Activated naive CD4-positive, alpha-beta T cell treated with anti-CD3 and anti-CD28 coated beads for 36 hours (primary cell): ENCODE measurements at regions of chr13 and their contacts with region 1.

Region 1: GRCh38 chr13:38349390-38350113 is at the start of gene UFM1:
- DNase-seq: peak; percentile 90
- H3K4me3 Mint-ChIP-seq: peak within 1 kb of the TSS; percentile 95
- H3K27ac Mint-ChIP-seq: peak within 1 kb of the TSS; percentile 97
- H3K4me1 Mint-ChIP-seq: peaks cover 37% of the 10 kb centered on the region
- H3K27me3 Mint-ChIP-seq: no peaks in the 10 kb centered on the region
- total RNA-seq, gene UFM1: 36.5 to 41.7 TPM

Region 2: DNA sequence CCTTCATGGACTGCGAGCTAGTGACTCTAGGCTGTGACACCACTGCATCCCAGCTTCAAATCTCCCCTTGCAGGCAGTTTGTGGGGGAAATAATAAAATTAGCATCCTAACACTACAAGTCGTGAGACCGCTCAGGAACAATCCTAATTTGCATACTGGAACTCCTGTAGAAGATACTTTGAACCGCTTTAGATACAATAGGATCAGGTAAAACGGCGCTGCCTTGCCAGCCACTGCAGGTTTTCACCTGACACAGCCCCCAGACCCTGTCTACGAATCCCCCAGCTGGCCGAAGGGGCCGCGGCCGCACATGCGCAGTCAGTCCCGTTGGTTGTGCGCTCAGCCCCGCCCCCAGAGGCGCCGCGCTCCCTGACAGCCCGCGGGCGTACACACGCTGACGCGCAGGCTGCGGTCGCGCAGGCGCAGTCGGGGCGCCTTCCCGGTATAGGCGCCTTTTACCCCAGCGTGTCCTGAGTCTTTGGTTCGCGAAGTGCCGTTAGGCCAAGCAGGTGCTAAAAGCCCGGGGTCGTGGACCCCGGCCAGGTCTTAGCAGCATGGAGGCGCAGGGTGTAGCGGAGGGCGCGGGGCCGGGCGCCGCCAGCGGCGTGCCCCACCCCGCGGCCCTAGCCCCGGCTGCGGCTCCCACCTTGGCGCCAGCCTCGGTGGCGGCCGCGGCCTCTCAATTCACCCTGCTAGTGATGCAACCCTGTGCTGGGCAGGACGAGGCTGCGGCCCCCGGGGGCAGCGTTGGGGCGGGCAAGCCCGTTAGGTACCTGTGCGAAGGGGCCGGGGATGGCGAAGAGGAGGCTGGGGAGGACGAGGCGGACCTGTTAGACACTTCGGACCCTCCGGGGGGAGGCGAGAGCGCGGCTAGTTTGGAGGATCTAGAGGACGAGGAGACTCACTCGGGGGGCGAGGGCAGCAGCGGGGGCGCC is 1530.5 kb before region 1 on chr13 and contains the start of gene RFXAP:
- CTCF ChIA-PET with region 1: no interaction called
- intact Hi-C with region 1: loop called (anchors 2 kb)
- DNase-seq: peak; percentile 89
- H3K4me3 Mint-ChIP-seq: peak within 1 kb of the TSS; percentile 93
- H3K27ac Mint-ChIP-seq: peak within 1 kb of the TSS; percentile 75
- H3K4me1 Mint-ChIP-seq: peaks cover 45% of the 10 kb centered on the region
- H3K27me3 Mint-ChIP-seq: peaks cover 8% of the 10 kb centered on the region
- total RNA-seq, gene RFXAP: 9.2 to 12.2 TPM

Region 3: DNA sequence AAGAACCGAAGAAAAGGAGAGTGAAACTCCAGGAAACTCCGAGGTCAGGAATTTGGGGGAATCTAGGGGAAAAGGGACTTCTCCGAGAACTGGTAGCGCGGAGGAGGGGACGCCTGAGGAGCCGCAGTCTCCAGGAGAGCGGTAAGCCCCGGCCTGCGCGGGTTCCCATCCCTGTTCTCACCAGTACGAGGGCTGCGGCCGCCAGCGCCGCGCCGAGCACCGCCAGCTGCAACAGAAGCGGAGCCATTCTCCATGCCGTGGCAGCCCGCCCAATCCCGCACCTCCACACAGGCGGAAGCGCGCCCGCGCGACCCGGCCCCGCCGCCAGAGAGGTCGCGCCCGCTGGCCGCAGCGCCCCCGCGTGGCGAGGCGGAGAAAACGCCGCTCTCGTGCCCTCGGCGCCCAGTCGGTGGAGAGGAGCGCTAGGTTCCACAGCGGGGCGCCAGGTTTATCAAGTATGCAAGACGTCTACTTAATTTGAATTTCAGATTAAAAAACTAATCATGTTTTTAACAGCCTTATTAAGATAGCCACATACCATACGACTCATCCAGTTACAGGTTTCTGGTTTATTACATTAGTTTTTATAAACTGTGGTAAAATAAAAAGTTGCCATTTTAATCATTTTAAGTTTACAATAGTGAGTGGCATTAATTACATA is 1350.4 kb before region 1 on chr13 and contains the start of gene ALG5:
- CTCF ChIA-PET with region 1: no interaction called
- intact Hi-C with region 1: loop called (anchors 1 kb)
- DNase-seq: peak; percentile 90
- H3K4me3 Mint-ChIP-seq: peak within 1 kb of the TSS; percentile 100
- H3K27ac Mint-ChIP-seq: peak within 1 kb of the TSS; percentile 100
- H3K4me1 Mint-ChIP-seq: peaks cover 41% of the 10 kb centered on the region
- H3K27me3 Mint-ChIP-seq: no peaks in the 10 kb centered on the region
- total RNA-seq, gene ALG5: 17.5 to 20.8 TPM

Region 4: DNA sequence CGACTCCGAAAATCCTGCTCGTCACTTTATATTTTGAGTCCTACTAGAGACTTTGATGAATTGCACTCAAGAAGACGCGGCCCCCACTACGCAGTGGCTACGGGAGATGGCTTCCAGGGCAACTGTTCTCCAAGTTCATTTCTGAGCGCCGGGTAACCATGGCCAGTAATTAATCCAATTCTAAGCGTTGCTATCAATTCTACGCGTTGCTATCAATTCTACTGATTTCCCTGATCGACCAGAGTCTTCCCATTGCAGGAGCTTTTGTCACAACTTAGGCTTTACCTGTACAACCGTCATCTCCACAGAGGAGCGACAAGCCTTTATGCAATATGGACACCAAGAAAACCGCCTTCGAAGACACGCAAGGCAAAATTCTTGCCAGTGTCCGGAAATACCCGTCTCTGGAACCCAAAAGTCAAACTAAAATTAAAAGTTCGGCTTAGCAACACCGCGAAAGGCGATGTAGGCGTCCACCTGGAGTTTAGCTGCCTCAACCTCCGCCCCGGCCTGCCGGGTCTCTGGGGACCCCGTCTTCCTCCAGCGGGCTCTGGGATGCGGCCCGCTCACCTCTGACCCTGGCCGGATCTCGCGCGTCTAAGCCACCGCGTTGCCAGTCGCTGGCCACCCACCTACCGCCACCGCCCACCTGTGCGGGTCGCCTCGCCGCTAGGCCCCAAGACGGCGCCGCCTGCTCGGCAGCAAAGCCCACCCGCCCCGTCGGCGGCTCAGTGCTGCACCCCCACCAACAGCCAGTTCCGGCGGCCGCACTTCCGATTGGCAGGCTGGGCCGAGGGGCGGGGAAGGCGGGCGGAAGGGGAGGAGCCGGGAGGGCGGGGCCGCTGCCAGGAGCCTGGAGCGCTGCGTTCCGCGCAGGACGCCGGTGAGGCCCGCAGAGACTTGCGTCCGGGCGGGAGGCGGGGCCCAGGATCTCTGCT is 1290.4 kb before region 1 on chr13 and contains the start of gene SUPT20H:
- CTCF ChIA-PET with region 1: no interaction called
- intact Hi-C with region 1: loop called (anchors 1 kb)
- DNase-seq: peak; percentile 94
- H3K4me3 Mint-ChIP-seq: peak within 1 kb of the TSS; percentile 97
- H3K27ac Mint-ChIP-seq: peak within 1 kb of the TSS; percentile 90
- H3K4me1 Mint-ChIP-seq: peaks cover 33% of the 10 kb centered on the region
- H3K27me3 Mint-ChIP-seq: no peaks in the 10 kb centered on the region
- total RNA-seq, gene SUPT20H: 51.0 to 57.7 TPM

Region 5: DNA sequence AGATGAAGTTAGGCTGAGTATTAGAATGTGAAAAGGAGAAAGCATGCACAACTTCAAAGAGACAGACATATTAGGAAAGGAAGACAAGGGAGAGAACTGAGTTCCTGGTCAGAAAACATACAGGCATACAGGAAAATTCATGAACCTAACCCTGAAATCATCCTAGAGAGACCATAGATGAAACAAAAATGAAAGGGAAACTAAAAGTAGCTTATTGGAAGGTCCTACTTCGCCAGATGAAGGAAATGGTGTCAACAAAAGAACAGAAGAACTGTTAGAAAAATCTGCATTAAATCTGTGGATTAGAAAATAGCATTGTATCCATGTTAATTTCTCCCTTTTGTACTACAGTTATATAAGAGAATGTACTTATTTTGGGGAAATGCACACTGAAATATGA is 168.9 kb before region 1 on chr13:
- CTCF ChIA-PET with region 1: no interaction called
- intact Hi-C with region 1: loop called (anchors 5 kb)
- DNase-seq: no peak
- H3K4me3 Mint-ChIP-seq: peak overlapping the region; percentile 3
- H3K27ac Mint-ChIP-seq: no peak overlapping the region
- H3K4me1 Mint-ChIP-seq: peaks cover 10% of the 10 kb centered on the region
- H3K27me3 Mint-ChIP-seq: no peaks in the 10 kb centered on the region

Region 6: DNA sequence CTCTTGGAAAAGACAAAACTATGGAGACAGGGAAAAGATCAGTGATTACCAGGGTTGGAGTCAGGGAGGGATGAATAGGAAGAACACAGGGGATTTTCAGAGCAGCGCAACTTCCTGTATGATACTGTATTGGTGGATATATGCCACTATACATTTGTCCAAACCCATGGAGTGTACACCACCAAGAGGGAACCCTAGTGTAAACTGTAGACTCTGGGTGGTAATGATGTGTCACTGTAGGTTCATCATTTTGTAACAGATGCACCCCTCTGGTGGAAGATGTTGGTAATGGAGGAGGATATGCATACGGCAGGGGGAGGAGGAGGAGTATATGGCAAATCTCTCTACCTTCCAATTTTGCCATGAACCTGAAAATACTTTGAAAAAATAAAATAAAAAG is 68.2 kb after region 1 on chr13:
- CTCF ChIA-PET with region 1: no interaction called
- intact Hi-C with region 1: loop called (anchors 1 kb)
- DNase-seq: peak; percentile 24
- H3K4me3 Mint-ChIP-seq: no peak overlapping the region
- H3K27ac Mint-ChIP-seq: no peak overlapping the region
- H3K4me1 Mint-ChIP-seq: peaks cover 6% of the 10 kb centered on the region
- H3K27me3 Mint-ChIP-seq: no peaks in the 10 kb centered on the region

Region 7: DNA sequence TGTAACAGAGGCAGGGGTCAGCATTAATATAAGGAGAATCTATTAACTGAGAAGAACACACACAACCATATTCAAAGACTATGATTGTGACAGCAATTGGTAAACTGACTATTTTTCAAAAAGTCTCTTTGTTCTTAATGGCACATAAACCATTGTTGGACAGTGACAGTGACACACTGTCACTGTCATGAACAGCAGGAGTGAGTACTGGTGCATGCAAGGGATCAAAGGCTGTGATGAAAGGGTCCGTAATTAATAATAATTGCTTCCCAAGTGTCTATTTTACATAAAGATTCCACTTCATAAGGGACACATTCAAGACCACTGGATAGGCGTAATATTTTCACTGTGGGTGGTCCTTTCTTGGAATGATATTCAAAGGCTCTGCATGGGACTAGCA is 1202.7 kb after region 1 on chr13:
- CTCF ChIA-PET with region 1: no interaction called
- intact Hi-C with region 1: no loop called
- DNase-seq: no peak
- H3K4me3 Mint-ChIP-seq: no peak overlapping the region
- H3K27ac Mint-ChIP-seq: no peak overlapping the region
- H3K4me1 Mint-ChIP-seq: no peaks in the 10 kb centered on the region
- H3K27me3 Mint-ChIP-seq: peaks cover 12% of the 10 kb centered on the region

Region 8: DNA sequence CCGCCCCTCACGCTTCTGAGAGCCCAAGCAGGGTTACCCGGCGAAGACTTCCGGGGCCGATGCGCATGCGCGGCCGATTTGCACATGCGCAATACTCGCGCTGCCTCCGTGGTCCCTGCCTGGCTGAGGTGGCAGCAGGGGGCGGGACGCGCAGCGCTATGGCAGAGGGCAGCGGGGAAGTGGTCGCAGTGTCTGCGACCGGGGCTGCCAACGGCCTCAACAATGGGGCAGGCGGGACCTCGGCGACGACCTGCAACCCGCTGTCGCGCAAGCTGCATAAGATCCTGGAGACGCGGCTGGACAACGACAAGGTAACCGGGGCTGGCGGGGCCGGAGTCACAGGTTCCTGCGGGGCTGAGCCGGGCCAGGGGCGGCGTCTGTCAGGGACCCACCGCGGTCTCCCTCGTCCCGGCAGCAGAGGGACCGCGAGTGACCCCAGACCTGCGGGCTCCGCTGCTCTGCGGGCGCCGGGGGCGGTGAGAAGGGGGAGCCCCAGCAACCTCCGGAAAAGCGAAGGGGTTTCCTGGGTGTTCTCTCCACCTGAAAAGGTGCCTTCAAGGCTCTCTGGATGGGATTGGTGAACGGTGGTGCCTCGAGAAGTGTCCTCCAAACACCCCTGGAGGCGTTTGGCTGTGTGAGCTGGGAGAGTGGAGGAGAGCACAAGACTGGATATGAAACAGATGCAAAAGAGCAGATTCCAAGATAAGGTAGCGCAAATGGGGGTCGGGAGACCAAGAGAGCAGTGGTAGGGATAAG is 1306.2 kb after region 1 on chr13 and contains the start of gene COG6:
- CTCF ChIA-PET with region 1: no interaction called
- intact Hi-C with region 1: loop called (anchors 5 kb)
- DNase-seq: peak; percentile 93
- H3K4me3 Mint-ChIP-seq: peak within 1 kb of the TSS; percentile 92
- H3K27ac Mint-ChIP-seq: peak within 1 kb of the TSS; percentile 74
- H3K4me1 Mint-ChIP-seq: peaks cover 27% of the 10 kb centered on the region
- H3K27me3 Mint-ChIP-seq: peaks cover 2% of the 10 kb centered on the region
- total RNA-seq, gene COG6: 21.2 to 28.3 TPM